Psoas muscle (tissue), 8 donors: ENCODE measurements at regions of chr6 and their contacts with region 1.

Region 1: DNA sequence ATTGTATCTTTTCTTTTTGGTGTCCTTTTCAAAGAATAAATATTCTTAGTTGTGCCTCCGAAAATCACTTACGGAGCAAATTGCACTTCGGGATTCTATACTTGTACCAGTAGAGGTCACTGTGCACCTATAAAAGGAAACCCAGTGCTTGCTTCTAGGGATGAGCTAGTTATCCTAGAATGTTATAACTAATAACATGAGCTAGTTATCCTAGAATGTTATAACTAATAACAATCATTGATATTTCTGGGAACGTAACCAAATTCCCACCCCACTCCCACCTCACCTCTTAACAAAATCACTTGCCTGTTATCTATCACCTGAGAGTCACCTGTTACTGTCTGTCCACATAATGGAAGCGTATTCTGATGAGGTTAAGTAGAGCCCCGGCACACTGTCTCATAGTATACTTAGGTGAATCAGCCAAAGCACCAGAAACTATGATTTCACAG is 126.9 kb upstream of the TIAM2 start:
- DNase-seq: no peak
- ATAC-seq: peak; percentile 66 to 86 (median 72)
- H3K4me3 ChIP-seq: no peak overlapping the region
- H3K27ac ChIP-seq: no peak overlapping the region
- H3K4me1 ChIP-seq: peaks cover 10% of the 10 kb centered on the region
- H3K27me3 ChIP-seq: no peaks in the 10 kb centered on the region
- CTCF ChIP-seq: peak; percentile 75

Region 2: GRCh38 chr6:154852687-154853086 is 15.5 kb before region 1 on chr6:
- intact Hi-C with region 1: loop called in 1 of 2 experiments (anchors 1 kb)
- DNase-seq: no peak
- ATAC-seq: no peak
- H3K4me3 ChIP-seq: no peak overlapping the region
- H3K27ac ChIP-seq: no peak overlapping the region
- H3K4me1 ChIP-seq: peaks cover 10% of the 10 kb centered on the region
- H3K27me3 ChIP-seq: no peaks in the 10 kb centered on the region
- CTCF ChIP-seq: no peak

Region 3: DNA sequence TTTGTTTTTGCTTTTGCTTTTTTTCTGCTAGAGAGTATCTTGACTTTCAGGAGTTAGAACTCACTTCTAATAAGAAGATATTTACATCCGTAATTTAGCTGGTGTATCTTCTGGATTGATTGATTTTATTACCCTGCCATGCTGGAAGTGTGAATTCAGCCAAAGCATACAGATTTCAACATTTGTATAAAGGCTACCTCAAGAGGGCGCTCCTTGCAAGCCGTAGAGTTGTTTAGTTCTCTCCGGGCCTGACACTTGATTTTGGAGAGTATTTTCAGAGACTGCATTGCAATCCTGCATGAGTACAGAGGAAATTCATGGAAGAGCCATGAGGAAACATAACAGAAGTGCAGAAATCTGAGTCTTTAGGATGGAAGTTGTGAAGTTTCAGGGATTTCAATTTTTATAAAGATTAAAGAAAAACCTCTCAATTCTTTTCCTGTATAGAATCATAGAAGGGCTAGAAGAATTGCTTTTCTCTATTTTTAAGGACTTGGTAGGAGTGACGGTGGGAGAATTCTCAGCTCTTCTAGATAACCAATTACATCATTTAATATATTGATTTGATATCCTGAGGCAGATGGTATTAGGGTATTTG is 60.3 kb after region 1 on chr6:
- intact Hi-C with region 1: loop called in 1 of 2 experiments (anchors 5 kb)
- DNase-seq: no peak
- ATAC-seq: peak; percentile 43 to 79 (median 68)
- H3K4me3 ChIP-seq: no peak overlapping the region
- H3K27ac ChIP-seq: no peak overlapping the region
- H3K4me1 ChIP-seq: peaks cover 7% of the 10 kb centered on the region
- H3K27me3 ChIP-seq: no peaks in the 10 kb centered on the region
- CTCF ChIP-seq: peak; percentile 71

Region 4: GRCh38 chr6:155062866-155063341 is 194.7 kb after region 1 on chr6:
- intact Hi-C with region 1: no loop called
- DNase-seq: no peak
- ATAC-seq: no peak
- H3K4me3 ChIP-seq: no peak overlapping the region
- H3K27ac ChIP-seq: no peak overlapping the region
- H3K4me1 ChIP-seq: no peaks in the 10 kb centered on the region
- H3K27me3 ChIP-seq: no peaks in the 10 kb centered on the region
- CTCF ChIP-seq: no peak

Region 5: GRCh38 chr6:155108070-155108820 is 240.1 kb after region 1 on chr6:
- intact Hi-C with region 1: no loop called
- DNase-seq: no peak
- ATAC-seq: no peak
- H3K4me3 ChIP-seq: peak overlapping the region; percentile 63
- H3K27ac ChIP-seq: no peak overlapping the region
- H3K4me1 ChIP-seq: peaks cover 11% of the 10 kb centered on the region
- H3K27me3 ChIP-seq: no peaks in the 10 kb centered on the region
- CTCF ChIP-seq: no peak